Right cardiac atrium (tissue), 5 donors: ENCODE measurements at regions of chr20 and their contacts with region 1.

Region 1: GRCh38 chr20:44537993-44538392 is 16.1 kb upstream of the SERINC3 start:
- DNase-seq: no peak
- ATAC-seq: no peak
- H3K4me3 ChIP-seq: no peak overlapping the region
- H3K27ac ChIP-seq: no peak overlapping the region
- H3K4me1 ChIP-seq: peaks cover under 1% of the 10 kb centered on the region
- H3K27me3 ChIP-seq: no peaks in the 10 kb centered on the region

Region 2: DNA sequence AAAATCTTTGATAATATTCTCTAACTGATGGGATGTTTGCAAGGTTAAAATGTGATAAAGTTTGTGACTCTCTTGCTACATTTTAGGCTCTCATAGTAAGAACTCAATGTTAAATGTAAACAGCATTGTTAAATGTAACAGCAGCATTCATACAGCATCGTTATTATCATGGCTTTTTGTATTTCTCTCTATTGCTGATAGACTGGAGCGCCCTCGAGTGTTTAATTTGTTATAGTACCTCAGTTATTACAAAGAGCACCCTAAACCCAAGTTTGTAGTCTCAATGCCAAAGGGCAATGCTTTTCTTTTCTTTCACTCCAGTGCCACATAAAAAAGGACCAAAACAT is 77.2 kb before region 1 on chr20:
- intact Hi-C with region 1: no loop called
- DNase-seq: no peak
- ATAC-seq: no peak
- H3K4me3 ChIP-seq: no peak overlapping the region
- H3K27ac ChIP-seq: no peak overlapping the region
- H3K4me1 ChIP-seq: no peaks in the 10 kb centered on the region
- H3K27me3 ChIP-seq: no peaks in the 10 kb centered on the region

Region 3: GRCh38 chr20:44615169-44615791 is 77.3 kb after region 1 on chr20:
- intact Hi-C with region 1: loop called in 1 of 4 experiments (anchors 5 kb)
- DNase-seq: peak; percentile 40 to 79 (median 66)
- ATAC-seq: peak; percentile 24 to 52
- H3K4me3 ChIP-seq: no peak overlapping the region
- H3K27ac ChIP-seq: peak overlapping the region; percentile 77
- H3K4me1 ChIP-seq: peaks cover 15% of the 10 kb centered on the region
- H3K27me3 ChIP-seq: no peaks in the 10 kb centered on the region